ENCODE measurements at regions of chr12 and their contacts with region 1.

Region 1: DNA sequence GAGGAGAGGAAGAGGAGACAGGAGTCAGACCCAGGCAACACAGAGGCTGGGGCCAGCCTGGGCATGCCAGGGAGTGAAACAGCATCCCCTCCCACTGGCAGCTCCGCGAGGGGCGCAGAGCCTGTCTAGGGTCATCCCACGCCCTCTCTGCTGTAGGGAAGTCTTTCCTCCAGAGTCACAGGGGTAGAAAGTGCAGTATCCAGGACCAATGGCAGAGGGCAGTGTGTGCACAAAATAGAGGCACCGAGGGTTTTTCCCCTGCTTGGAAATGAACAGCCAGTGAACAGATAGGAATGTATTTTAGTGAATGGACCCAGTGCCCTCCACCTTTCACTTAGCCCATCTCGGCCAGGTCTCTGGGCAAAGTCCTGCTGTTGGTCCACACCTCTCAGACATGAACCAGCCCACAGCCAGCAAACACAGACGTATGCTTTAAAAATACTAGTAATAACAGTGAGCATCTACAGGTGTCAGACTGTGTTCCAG is 9.4 kb upstream of the KRT74 start:
- DNase-seq: peak; percentile 82
- H3K4me3 Mint-ChIP-seq: no peak overlapping the region
- H3K27ac Mint-ChIP-seq: no peak overlapping the region
- H3K4me1 Mint-ChIP-seq: peaks cover 26% of the 10 kb centered on the region
- H3K27me3 Mint-ChIP-seq: no peaks in the 10 kb centered on the region
- CTCF ChIP-seq: peak; percentile 76

Region 2: GRCh38 chr12:52139552-52140062 is 443.4 kb before region 1 on chr12:
- CTCF ChIA-PET with region 1: interaction called, 27 read pairs
- POLR2A ChIA-PET with region 1: no interaction called
- intact Hi-C with region 1: loop called (anchors 1 kb)
- DNase-seq: peak; percentile 75
- H3K4me3 Mint-ChIP-seq: no peak overlapping the region
- H3K27ac Mint-ChIP-seq: no peak overlapping the region
- H3K4me1 Mint-ChIP-seq: peaks cover 25% of the 10 kb centered on the region
- H3K27me3 Mint-ChIP-seq: no peaks in the 10 kb centered on the region
- CTCF ChIP-seq: peak; percentile 97

Region 3: GRCh38 chr12:52147367-52147972 is 435.5 kb before region 1 on chr12:
- CTCF ChIA-PET with region 1: interaction called, 27 read pairs
- POLR2A ChIA-PET with region 1: interaction called, 12 read pairs
- intact Hi-C with region 1: loop called (anchors 1 kb)
- DNase-seq: peak; percentile 98
- H3K4me3 Mint-ChIP-seq: peak overlapping the region; percentile 39
- H3K27ac Mint-ChIP-seq: peak overlapping the region; percentile 97
- H3K4me1 Mint-ChIP-seq: peaks cover 76% of the 10 kb centered on the region
- H3K27me3 Mint-ChIP-seq: no peaks in the 10 kb centered on the region
- CTCF ChIP-seq: no peak

Region 4: GRCh38 chr12:52156736-52157565 is 426.1 kb before region 1 on chr12:
- CTCF ChIA-PET with region 1: interaction called, 4 read pairs
- POLR2A ChIA-PET with region 1: interaction called, 8 read pairs
- intact Hi-C with region 1: loop called (anchors 5 kb)
- DNase-seq: peak; percentile 85
- H3K4me3 Mint-ChIP-seq: no peak overlapping the region
- H3K27ac Mint-ChIP-seq: peak overlapping the region; percentile 91
- H3K4me1 Mint-ChIP-seq: peaks cover 30% of the 10 kb centered on the region
- H3K27me3 Mint-ChIP-seq: no peaks in the 10 kb centered on the region
- CTCF ChIP-seq: peak; percentile 98

Region 5: DNA sequence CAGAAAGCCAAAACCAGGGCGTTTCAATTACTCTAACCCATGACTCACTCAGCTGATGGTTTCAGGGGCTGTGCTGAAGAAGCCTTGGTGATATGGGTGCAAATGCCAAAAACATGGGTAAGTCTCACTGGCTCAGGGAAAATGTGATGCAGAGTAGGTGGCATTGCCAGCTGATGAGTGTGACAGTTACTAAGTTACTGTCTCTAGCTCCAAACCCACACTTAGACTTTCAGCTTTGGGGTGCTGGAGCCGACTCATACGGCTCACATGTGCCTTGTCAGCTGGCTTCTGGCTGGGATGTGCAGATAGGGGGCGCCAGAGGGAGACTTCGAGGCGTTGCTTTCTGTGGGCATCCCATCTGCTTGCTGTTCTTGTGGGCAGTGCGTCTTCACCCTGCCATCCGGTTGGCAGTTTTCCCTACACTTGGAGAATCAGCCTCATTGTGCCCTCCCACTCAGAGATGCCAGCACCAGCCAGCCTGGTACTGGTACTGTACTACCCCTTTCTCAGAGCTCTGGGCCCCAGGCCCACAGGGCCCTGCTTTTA is 361.0 kb before region 1 on chr12:
- CTCF ChIA-PET with region 1: no interaction called
- POLR2A ChIA-PET with region 1: no interaction called
- intact Hi-C with region 1: no loop called
- DNase-seq: peak; percentile 93
- H3K4me3 Mint-ChIP-seq: no peak overlapping the region
- H3K27ac Mint-ChIP-seq: peak overlapping the region; percentile 37
- H3K4me1 Mint-ChIP-seq: peaks cover 40% of the 10 kb centered on the region
- H3K27me3 Mint-ChIP-seq: no peaks in the 10 kb centered on the region
- CTCF ChIP-seq: peak; percentile 45

Region 6: DNA sequence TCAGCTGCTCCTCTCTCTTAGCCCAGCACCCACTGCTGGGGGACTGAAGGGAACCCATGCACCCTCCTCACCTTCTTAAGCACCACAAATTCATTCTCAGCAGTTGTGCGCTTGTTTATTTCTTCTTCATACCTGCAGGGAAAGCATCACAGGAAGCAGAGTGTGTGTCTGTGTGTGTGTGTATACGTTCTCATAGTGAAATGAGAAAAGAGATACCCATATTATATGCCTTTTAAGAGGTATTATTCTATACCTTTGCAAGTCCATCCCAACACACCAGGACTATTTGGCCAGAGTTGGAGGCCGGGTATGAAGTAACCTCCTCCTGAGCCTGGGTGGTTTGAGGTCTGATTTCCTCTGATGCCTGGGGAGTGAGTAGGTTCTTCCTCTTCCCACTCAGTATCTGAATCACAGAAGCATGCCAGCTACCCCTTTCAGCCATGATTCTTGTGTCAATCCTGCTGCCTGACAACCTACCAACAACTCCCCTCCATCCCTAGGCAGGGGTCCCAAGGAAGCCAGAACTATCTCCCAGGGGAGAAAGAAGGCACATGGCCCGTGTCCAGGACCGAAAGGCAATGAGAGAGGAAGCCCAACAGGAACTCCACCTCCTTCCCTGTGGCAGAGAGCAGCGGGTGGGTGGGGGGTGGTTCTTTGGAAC is 32.3 kb after region 1 on chr12:
- CTCF ChIA-PET with region 1: no interaction called
- POLR2A ChIA-PET with region 1: no interaction called
- intact Hi-C with region 1: no loop called
- DNase-seq: no peak
- H3K4me3 Mint-ChIP-seq: no peak overlapping the region
- H3K27ac Mint-ChIP-seq: no peak overlapping the region
- H3K4me1 Mint-ChIP-seq: no peaks in the 10 kb centered on the region
- H3K27me3 Mint-ChIP-seq: peaks cover 55% of the 10 kb centered on the region
- CTCF ChIP-seq: no peak

Region 7: DNA sequence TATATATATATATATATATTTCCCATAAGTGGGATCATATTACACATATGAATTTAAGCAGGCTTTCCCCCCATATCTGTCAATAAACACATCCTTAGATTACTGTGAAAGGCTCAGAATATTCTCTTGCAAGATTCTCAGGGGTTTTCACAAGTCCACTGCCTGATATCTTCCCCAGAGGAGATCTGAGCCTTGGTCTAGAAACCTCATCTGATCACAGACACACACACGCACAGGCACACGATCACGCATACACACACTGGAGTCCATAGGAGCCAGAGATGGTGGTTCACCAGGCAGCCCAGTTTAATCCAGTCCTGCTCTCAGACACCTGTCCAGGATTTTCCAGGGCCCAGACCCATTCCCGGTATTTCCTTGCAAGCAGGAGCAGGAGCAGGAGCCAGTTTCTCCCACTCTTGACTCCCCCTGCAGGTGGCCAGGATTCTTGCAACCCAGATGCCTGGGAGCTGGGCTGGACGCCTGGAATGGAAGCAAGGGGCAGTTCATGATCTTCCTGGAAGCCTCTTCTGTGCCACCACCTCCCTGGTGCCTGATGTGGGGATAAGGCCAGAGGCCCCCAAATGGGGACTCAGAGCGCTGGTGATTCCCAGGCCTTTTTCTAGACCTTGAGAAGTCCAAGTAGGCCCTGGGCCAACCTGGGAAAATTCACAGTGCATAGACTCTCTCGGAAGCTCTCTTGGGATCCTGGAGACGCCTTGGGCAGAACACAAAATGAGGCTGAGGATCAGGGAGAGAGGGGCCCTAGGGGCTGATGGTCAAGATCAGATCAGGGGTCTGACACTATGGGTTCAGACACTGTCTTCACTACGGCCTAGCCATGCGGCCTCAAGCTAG is 282.3 kb after region 1 on chr12:
- CTCF ChIA-PET with region 1: interaction called, 366 read pairs
- POLR2A ChIA-PET with region 1: interaction called, 29 read pairs
- intact Hi-C with region 1: loop called (anchors 1 kb)
- DNase-seq: peak; percentile 84
- H3K4me3 Mint-ChIP-seq: no peak overlapping the region
- H3K27ac Mint-ChIP-seq: no peak overlapping the region
- H3K4me1 Mint-ChIP-seq: peaks cover 38% of the 10 kb centered on the region
- H3K27me3 Mint-ChIP-seq: no peaks in the 10 kb centered on the region
- CTCF ChIP-seq: peak; percentile 87

Region 8: GRCh38 chr12:52870351-52871290 is 287.6 kb after region 1 on chr12:
- CTCF ChIA-PET with region 1: interaction called, 366 read pairs
- POLR2A ChIA-PET with region 1: interaction called, 40 read pairs
- intact Hi-C with region 1: loop called (anchors 1 kb)
- DNase-seq: peak; percentile 84
- H3K4me3 Mint-ChIP-seq: peak overlapping the region; percentile 14
- H3K27ac Mint-ChIP-seq: peak overlapping the region; percentile 90
- H3K4me1 Mint-ChIP-seq: peaks cover 77% of the 10 kb centered on the region
- H3K27me3 Mint-ChIP-seq: no peaks in the 10 kb centered on the region
- CTCF ChIP-seq: peak; percentile 95

Measured in MCF 10A (cell line).